ENCODE measurements at regions of chr2 and their contacts with region 1.

Region 1: GRCh38 chr2:121530212-121530705 is 421 bp upstream of the RNU4ATAC start:
- DNase-seq: peak in 3 of 5 donors; percentile 77 to 90 (median 77)
- H3K4me3 ChIP-seq: peak overlapping the region; percentile 66
- H3K4me3 Mint-ChIP-seq: peak overlapping the region; percentile 86 to 97 (median 97)
- H3K27ac ChIP-seq: peak overlapping the region; percentile 100
- H3K27ac Mint-ChIP-seq: peak overlapping the region; percentile 94 to 100 (median 100)
- H3K4me1 ChIP-seq: peaks cover 17% of the 10 kb centered on the region
- H3K4me1 Mint-ChIP-seq: peaks cover 29 to 67% (median 40%) of the 10 kb centered on the region in 3 donors
- H3K27me3 ChIP-seq: no peaks in the 10 kb centered on the region
- H3K27me3 Mint-ChIP-seq: no peaks in the 10 kb centered on the region

Region 2: GRCh38 chr2:121649596-121650314 is 119.5 kb after region 1 on chr2:
- CTCF ChIA-PET with region 1: interaction called, 15 read pairs
- POLR2A ChIA-PET with region 1: interaction called, 30 read pairs
- DNase-seq: peak; percentile 92 to 99 (median 98)
- H3K4me3 ChIP-seq: peak overlapping the region; percentile 85
- H3K4me3 Mint-ChIP-seq: peak overlapping the region; percentile 95 to 100 (median 98)
- H3K27ac ChIP-seq: peak overlapping the region; percentile 92
- H3K27ac Mint-ChIP-seq: peak overlapping the region; percentile 99 to 100 (median 99)
- H3K4me1 ChIP-seq: peaks cover 30% of the 10 kb centered on the region
- H3K4me1 Mint-ChIP-seq: peaks cover 58 to 80% (median 69%) of the 10 kb centered on the region in 3 donors
- H3K27me3 ChIP-seq: no peaks in the 10 kb centered on the region
- H3K27me3 Mint-ChIP-seq: peaks cover 0 to 7% of the 10 kb centered on the region in 2 donors

Region 3: DNA sequence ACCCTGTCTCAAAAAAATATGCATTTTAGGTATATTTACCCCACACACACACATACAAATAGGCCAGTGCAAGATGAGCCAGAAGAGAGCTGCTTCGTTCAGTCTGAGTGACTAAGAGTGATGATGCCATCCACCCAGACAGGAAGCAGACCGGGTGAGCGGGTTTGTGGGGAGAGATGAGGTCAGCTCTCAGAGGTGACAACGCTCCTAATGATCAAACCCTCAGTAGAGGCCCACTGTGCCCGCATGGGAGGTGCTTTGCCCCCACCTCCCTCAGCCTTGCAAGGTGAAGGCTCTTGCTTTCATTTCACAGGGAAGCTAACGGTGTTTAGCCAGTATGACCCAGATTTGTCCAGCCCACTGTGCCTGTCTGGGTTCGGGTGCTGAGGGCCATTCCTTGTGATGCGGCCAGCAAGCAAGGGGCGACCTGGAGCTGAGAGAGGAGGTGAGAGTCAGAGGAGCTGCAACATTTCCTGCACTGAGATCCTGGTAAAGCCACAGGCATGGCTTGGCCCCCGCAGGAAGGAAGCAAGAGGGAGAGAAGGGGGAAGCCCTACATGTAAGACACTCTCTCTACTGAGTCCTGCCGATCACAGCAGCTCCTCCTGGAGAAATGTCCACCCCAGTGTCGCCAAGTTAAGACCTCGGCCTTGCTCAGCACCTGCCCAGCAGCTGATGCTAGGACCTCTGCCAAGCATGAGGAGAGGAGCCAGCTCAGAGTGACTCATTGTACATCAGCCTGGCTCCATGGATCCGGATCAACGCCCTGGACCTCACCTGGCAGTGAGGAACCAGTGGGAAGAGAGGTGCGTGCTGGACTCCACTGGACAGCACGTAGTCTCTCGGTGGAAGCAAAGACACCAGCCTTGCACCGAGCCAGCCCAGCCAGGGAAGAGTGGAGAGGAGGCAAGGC is 169.4 kb after region 1 on chr2:
- CTCF ChIA-PET with region 1: interaction called, 23 read pairs
- POLR2A ChIA-PET with region 1: interaction called, 21 read pairs
- DNase-seq: peak; percentile 74 to 96 (median 85)
- H3K4me3 ChIP-seq: peak overlapping the region; percentile 58
- H3K4me3 Mint-ChIP-seq: peak overlapping the region; percentile 73 to 91 (median 87)
- H3K27ac ChIP-seq: peak overlapping the region; percentile 85
- H3K27ac Mint-ChIP-seq: peak overlapping the region; percentile 97 to 100 (median 99)
- H3K4me1 ChIP-seq: peaks cover 31% of the 10 kb centered on the region
- H3K4me1 Mint-ChIP-seq: peaks cover 41 to 49% (median 49%) of the 10 kb centered on the region in 3 donors
- H3K27me3 ChIP-seq: no peaks in the 10 kb centered on the region
- H3K27me3 Mint-ChIP-seq: no peaks in the 10 kb centered on the region

Region 4: DNA sequence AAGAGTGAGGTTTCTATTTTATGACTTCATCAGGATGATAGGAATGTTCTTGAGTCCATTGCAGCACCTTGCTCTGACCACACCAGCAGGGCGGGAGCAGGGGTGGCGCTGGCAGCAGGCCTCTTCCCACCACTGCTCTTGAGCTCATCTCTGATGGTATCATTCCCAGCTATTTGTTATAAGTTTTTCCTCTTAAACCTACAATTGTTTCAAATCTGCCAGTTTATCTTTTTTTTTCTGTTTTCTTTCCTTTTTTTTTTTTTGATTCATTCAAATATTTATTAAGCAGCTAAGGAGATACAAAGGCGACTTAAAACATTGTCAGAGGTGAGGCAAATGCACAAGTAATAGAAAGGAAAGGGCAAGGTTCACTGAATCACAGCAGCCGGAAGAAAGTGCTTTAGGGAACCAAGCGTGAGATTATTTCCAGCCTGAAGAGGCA is 177.7 kb after region 1 on chr2:
- CTCF ChIA-PET with region 1: interaction called, 11 read pairs
- POLR2A ChIA-PET with region 1: no interaction called
- DNase-seq: no peak
- H3K4me3 ChIP-seq: no peak overlapping the region
- H3K4me3 Mint-ChIP-seq: no peak overlapping the region
- H3K27ac ChIP-seq: no peak overlapping the region
- H3K27ac Mint-ChIP-seq: peak overlapping the region in 3 of 8 donors; percentile 14 to 85 (median 39)
- H3K4me1 ChIP-seq: no peaks in the 10 kb centered on the region
- H3K4me1 Mint-ChIP-seq: no peaks in the 10 kb centered on the region
- H3K27me3 ChIP-seq: no peaks in the 10 kb centered on the region
- H3K27me3 Mint-ChIP-seq: peaks cover 0 to 4% of the 10 kb centered on the region in 2 donors

Region 5: GRCh38 chr2:121722479-121722878 is 192.2 kb after region 1 on chr2:
- CTCF ChIA-PET with region 1: interaction called, 49 read pairs
- POLR2A ChIA-PET with region 1: interaction called, 6 read pairs
- DNase-seq: no peak
- H3K4me3 ChIP-seq: no peak overlapping the region
- H3K4me3 Mint-ChIP-seq: no peak overlapping the region
- H3K27ac ChIP-seq: no peak overlapping the region
- H3K27ac Mint-ChIP-seq: no peak overlapping the region
- H3K4me1 ChIP-seq: peaks cover 3% of the 10 kb centered on the region
- H3K4me1 Mint-ChIP-seq: peaks cover 3 to 6% (median 5%) of the 10 kb centered on the region in 3 donors
- H3K27me3 ChIP-seq: no peaks in the 10 kb centered on the region
- H3K27me3 Mint-ChIP-seq: no peaks in the 10 kb centered on the region

Region 6: GRCh38 chr2:121736462-121737341 is 206.4 kb after region 1 on chr2 and contains the start of gene NIFK:
- CTCF ChIA-PET with region 1: interaction called, 12 read pairs
- POLR2A ChIA-PET with region 1: interaction called, 26 read pairs
- DNase-seq: peak; percentile 99 to 100 (median 100)
- H3K4me3 ChIP-seq: peak within 1 kb of the TSS; percentile 97
- H3K4me3 Mint-ChIP-seq: peak within 1 kb of the TSS; percentile 94 to 100 (median 98)
- H3K27ac ChIP-seq: peak within 1 kb of the TSS; percentile 92
- H3K27ac Mint-ChIP-seq: peak within 1 kb of the TSS; percentile 76 to 100 (median 96)
- H3K4me1 ChIP-seq: peaks cover 28% of the 10 kb centered on the region
- H3K4me1 Mint-ChIP-seq: peaks cover 30 to 49% (median 45%) of the 10 kb centered on the region in 3 donors
- H3K27me3 ChIP-seq: no peaks in the 10 kb centered on the region
- H3K27me3 Mint-ChIP-seq: peaks cover 0 to 1% of the 10 kb centered on the region in 2 donors
- total RNA-seq, gene NIFK: 167 to 169 TPM